Naive thymus-derived CD4-positive, alpha-beta T cell (primary cell): ENCODE measurements at regions of chr10 and their contacts with region 1.

Region 1: DNA sequence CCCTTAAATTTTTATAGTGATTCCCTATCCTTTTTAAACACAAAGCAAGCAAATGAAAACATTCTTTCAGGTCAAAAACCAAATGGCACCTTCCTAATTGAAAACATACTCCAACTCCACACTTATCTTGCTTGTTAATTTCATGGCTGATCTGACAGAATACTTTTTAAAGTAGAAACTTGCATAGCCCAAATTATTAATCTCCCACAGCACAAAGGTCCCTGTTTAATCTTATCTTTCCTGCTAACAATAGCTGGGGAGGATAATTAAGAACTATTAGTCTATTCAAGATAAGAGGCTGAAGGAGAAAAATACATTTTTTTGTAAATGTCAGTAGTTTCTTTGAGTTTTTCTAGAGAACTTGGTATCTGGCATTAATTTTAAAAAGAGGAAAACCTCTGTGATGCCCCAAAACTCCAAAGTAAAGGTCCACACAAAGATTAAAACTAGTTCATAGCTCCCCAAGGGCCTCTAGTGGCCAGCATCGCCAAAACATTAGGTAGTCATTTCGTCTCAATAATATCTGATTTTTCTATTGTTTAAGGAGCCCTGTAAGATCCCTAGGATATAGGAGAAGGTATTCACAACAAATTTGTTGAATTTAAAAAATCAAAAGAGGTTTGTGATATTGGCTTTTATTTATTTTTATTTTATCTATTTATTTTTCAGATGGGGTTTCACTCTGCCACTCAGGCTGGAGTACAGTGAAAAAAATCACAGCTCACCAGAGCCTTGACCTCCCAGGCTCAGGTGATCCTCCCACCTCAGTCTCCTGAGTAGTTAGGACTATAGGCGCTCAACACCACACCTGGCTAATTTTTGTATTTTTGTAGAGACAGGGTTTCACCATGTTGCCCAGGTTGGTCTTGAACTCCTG is 14.7 kb downstream of the CDNF start:
- DNase-seq: peak in 6 of 9 donors; percentile 14 to 54 (median 38)
- ATAC-seq: peak; percentile 64
- H3K4me3 ChIP-seq: no peak overlapping the region
- H3K4me3 Mint-ChIP-seq: no peak overlapping the region
- H3K27ac ChIP-seq: no peak overlapping the region
- H3K27ac Mint-ChIP-seq: peak overlapping the region in 4 of 9 donors; percentile 5 to 14 (median 10)
- H3K4me1 ChIP-seq: no peaks in the 10 kb centered on the region
- H3K4me1 Mint-ChIP-seq: peaks cover 0 to 15% (median 3%) of the 10 kb centered on the region in 7 donors
- H3K27me3 ChIP-seq: no peaks in the 10 kb centered on the region
- H3K27me3 Mint-ChIP-seq: peaks cover 0 to 10% (median 0%) of the 10 kb centered on the region in 5 donors

Region 2: GRCh38 chr10:14200698-14201544 is 622.2 kb before region 1 on chr10:
- CTCF ChIA-PET with region 1: no interaction called
- POLR2A ChIA-PET with region 1: interaction called, 3 read pairs
- intact Hi-C with region 1: loop called in 1 of 2 experiments (anchors 1 kb)
- DNase-seq: no peak
- ATAC-seq: no peak
- H3K4me3 ChIP-seq: no peak overlapping the region
- H3K4me3 Mint-ChIP-seq: no peak overlapping the region
- H3K27ac ChIP-seq: no peak overlapping the region
- H3K27ac Mint-ChIP-seq: peak overlapping the region in 1 of 9 donors; percentile 74
- H3K4me1 ChIP-seq: no peaks in the 10 kb centered on the region
- H3K4me1 Mint-ChIP-seq: peaks cover 0 to 1% (median 0%) of the 10 kb centered on the region in 7 donors
- H3K27me3 ChIP-seq: no peaks in the 10 kb centered on the region
- H3K27me3 Mint-ChIP-seq: peaks cover 17 to 22% (median 18%) of the 10 kb centered on the region in 5 donors

Region 3: GRCh38 chr10:14536241-14537213 is 286.6 kb before region 1 on chr10:
- CTCF ChIA-PET with region 1: interaction called, 18 read pairs
- POLR2A ChIA-PET with region 1: no interaction called
- intact Hi-C with region 1: loop called (anchors 1 to 2 kb)
- DNase-seq: peak in 3 of 9 donors; percentile 29 to 47 (median 31)
- ATAC-seq: peak; percentile 72
- H3K4me3 ChIP-seq: no peak overlapping the region
- H3K4me3 Mint-ChIP-seq: no peak overlapping the region
- H3K27ac ChIP-seq: no peak overlapping the region
- H3K27ac Mint-ChIP-seq: peak overlapping the region in 6 of 9 donors; percentile 31 to 83 (median 72)
- H3K4me1 ChIP-seq: peaks cover 4 to 31% of the 10 kb centered on the region in 2 donors
- H3K4me1 Mint-ChIP-seq: peaks cover 55 to 97% (median 90%) of the 10 kb centered on the region in 7 donors
- H3K27me3 ChIP-seq: no peaks in the 10 kb centered on the region
- H3K27me3 Mint-ChIP-seq: no peaks in the 10 kb centered on the region

Region 4: GRCh38 chr10:14564268-14564744 is 258.8 kb before region 1 on chr10:
- CTCF ChIA-PET with region 1: interaction called, 10 read pairs
- POLR2A ChIA-PET with region 1: interaction called, 3 read pairs
- intact Hi-C with region 1: loop called in 1 of 2 experiments (anchors 1 kb)
- DNase-seq: peak in 6 of 9 donors; percentile 42 to 62 (median 58)
- ATAC-seq: peak; percentile 64
- H3K4me3 ChIP-seq: peak overlapping the region; percentile 51
- H3K4me3 Mint-ChIP-seq: peak overlapping the region; percentile 76 to 93 (median 86)
- H3K27ac ChIP-seq: peak overlapping the region; percentile 82
- H3K27ac Mint-ChIP-seq: peak overlapping the region; percentile 92 to 99 (median 96)
- H3K4me1 ChIP-seq: peaks cover 78 to 80% of the 10 kb centered on the region in 2 donors
- H3K4me1 Mint-ChIP-seq: peaks cover 84 to 100% (median 92%) of the 10 kb centered on the region in 7 donors
- H3K27me3 ChIP-seq: no peaks in the 10 kb centered on the region
- H3K27me3 Mint-ChIP-seq: no peaks in the 10 kb centered on the region